ENCODE measurements at regions of chr10 and their contacts with region 1.

Region 1: DNA sequence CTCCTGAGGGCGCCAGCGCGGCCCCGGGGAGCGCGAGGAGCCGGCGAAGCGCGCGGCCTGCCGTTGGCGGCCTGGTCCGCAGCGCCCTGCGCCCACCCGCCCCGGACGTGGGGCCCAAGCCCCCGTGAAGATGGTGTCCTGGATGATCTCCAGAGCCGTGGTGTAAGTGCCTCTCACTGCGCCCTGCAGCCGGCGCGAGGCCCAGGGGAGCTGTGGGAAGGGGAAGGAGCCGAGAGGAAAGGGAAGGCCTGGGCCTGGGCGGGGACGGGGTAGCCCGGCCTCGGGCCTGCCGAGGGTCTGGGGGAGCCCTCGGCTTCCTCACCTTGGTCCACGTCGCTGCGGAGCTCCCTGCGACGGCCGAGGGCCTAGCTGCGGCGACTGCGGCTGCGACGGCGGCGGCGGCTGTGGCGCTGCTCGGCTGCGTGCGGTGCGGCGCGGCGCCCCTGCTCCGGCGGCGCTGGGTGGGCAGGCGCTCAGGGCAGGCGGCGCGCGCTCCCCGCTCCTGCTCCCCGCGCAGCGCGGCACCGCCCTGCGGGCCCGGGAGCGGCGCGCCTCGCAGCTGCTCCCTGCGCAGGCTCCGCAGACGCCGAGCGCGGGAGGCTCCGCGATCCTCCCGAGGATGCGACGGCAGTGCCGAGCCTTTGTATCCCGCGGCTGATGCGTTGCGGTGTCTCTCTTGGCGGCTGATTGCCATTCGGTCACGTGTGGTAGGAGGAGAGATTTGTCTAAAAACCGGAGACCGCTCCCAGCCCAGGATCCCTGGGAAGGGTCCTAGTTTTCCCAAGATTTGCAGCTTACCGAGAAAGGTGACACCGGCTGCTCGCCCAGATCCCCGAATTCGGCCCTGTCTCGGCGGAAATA is 445 bp downstream of the REEP3 start:
- DNase-seq: peak; percentile 75
- ATAC-seq: peak; percentile 67
- H3K4me3 Mint-ChIP-seq: peak overlapping the region; percentile 84
- H3K27ac Mint-ChIP-seq: peak overlapping the region; percentile 98
- H3K4me1 Mint-ChIP-seq: peaks cover 61% of the 10 kb centered on the region
- H3K27me3 Mint-ChIP-seq: no peaks in the 10 kb centered on the region
- CTCF ChIP-seq: no peak

Region 2: GRCh38 chr10:63268798-63269503 is 252.7 kb before region 1 on chr10:
- CTCF ChIA-PET with region 1: interaction called, 3 read pairs
- POLR2A ChIA-PET with region 1: interaction called, 31 read pairs
- DNase-seq: peak; percentile 43
- ATAC-seq: peak; percentile 93
- H3K4me3 Mint-ChIP-seq: peak overlapping the region; percentile 98
- H3K27ac Mint-ChIP-seq: peak overlapping the region; percentile 100
- H3K4me1 Mint-ChIP-seq: peaks cover 11% of the 10 kb centered on the region
- H3K27me3 Mint-ChIP-seq: no peaks in the 10 kb centered on the region
- CTCF ChIP-seq: no peak

Measured in WTC11 (cell line).